Activated CD4-positive, alpha-beta T cell treated with anti-CD3 and anti-CD28 coated beads for 36 hours (primary cell): ENCODE measurements at regions of chr7 and their contacts with region 1.

Region 1: GRCh38 chr7:30276203-30276900 is 8.0 kb upstream of the ZNRF2 start:
- DNase-seq: peak; percentile 69
- ATAC-seq: peak; percentile 87
- H3K4me3 Mint-ChIP-seq: no peak overlapping the region
- H3K27ac Mint-ChIP-seq: no peak overlapping the region
- H3K4me1 Mint-ChIP-seq: peaks cover 6% of the 10 kb centered on the region
- H3K27me3 Mint-ChIP-seq: no peaks in the 10 kb centered on the region

Region 2: GRCh38 chr7:30348083-30348560 is 71.8 kb after region 1 on chr7:
- CTCF ChIA-PET with region 1: interaction called, 16 read pairs
- POLR2A ChIA-PET with region 1: interaction called, 3 read pairs
- intact Hi-C with region 1: no loop called
- DNase-seq: peak; percentile 59
- ATAC-seq: peak; percentile 91
- H3K4me3 Mint-ChIP-seq: peak overlapping the region; percentile 69
- H3K27ac Mint-ChIP-seq: peak overlapping the region; percentile 88
- H3K4me1 Mint-ChIP-seq: peaks cover 54% of the 10 kb centered on the region
- H3K27me3 Mint-ChIP-seq: no peaks in the 10 kb centered on the region

Region 3: GRCh38 chr7:30412810-30413504 is 136.6 kb after region 1 on chr7:
- CTCF ChIA-PET with region 1: interaction called, 3 read pairs
- POLR2A ChIA-PET with region 1: no interaction called
- intact Hi-C with region 1: loop called (anchors 2 kb)
- DNase-seq: no peak
- ATAC-seq: peak; percentile 60
- H3K4me3 Mint-ChIP-seq: no peak overlapping the region
- H3K27ac Mint-ChIP-seq: no peak overlapping the region
- H3K4me1 Mint-ChIP-seq: no peaks in the 10 kb centered on the region
- H3K27me3 Mint-ChIP-seq: no peaks in the 10 kb centered on the region

Region 4: DNA sequence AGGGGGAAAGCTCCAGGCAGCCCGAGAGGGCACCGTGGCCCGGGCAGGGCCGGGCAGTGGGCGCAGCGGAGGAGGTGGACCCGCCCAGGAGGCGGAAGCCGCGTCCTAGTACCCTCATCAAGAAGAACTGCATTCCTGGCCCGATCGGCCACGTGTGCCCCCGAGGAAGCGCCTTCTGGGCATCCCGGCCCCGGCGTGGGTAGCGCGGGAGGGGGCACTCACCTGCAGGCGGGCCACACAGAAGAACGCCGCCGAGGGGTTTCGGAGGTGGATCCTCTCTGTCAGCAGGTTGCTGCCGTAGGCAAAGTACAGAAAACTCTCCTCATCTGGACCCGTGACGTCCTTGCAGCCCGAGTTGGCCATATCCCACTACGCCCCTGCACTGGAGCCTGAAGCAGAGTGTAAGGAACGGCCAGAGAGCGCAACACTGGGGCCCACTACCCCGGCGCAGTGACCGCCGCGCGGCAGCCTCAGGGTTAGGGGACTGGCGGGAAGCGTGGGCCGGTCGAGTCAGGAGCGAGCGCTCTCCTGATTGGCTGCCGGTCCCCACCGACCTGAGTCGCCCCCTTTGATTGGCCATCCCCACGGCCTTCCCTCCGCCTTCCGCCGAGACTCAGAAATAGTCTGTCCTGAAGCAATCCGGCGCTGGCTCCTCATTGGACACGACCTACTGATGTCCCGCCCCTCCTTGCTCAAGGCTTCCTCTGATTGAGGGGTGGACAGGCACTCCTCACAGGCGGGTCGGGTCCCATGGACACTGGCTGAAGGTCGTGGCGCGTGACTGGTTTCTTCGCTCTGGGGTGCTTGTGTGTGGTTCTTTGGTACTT is 228.2 kb after region 1 on chr7 and contains the start of gene GGCT:
- CTCF ChIA-PET with region 1: interaction called, 3 read pairs
- POLR2A ChIA-PET with region 1: no interaction called
- intact Hi-C with region 1: loop called (anchors 2 kb)
- DNase-seq: peak; percentile 98
- ATAC-seq: peak; percentile 99
- H3K4me3 Mint-ChIP-seq: peak within 1 kb of the TSS; percentile 84
- H3K27ac Mint-ChIP-seq: peak within 1 kb of the TSS; percentile 90
- H3K4me1 Mint-ChIP-seq: peaks cover 44% of the 10 kb centered on the region
- H3K27me3 Mint-ChIP-seq: no peaks in the 10 kb centered on the region
- total RNA-seq, gene GGCT: 48.8 to 76.8 TPM

Region 5: DNA sequence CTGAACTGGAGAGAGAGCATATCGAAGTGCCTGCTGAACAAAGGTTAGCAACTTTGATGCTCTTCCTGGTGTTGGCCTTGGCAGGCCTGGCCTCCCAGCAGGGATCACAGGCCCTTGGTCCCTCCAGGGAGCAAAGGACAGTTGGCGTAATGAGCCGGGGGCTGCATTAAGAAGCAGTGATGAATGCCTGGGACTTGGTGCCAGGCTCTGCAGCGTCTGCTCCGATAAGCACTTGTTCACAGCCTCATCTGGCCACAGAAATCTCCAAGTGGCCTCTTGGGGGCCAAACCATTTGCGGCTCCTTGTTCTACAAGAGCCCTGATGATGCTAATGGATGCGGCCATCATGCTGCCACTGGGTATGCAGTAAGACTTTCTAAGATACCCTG is 374.1 kb after region 1 on chr7:
- CTCF ChIA-PET with region 1: no interaction called
- POLR2A ChIA-PET with region 1: no interaction called
- intact Hi-C with region 1: no loop called
- DNase-seq: no peak
- ATAC-seq: no peak
- H3K4me3 Mint-ChIP-seq: no peak overlapping the region
- H3K27ac Mint-ChIP-seq: no peak overlapping the region
- H3K4me1 Mint-ChIP-seq: no peaks in the 10 kb centered on the region
- H3K27me3 Mint-ChIP-seq: no peaks in the 10 kb centered on the region